ENCODE measurements at regions of chr4 and their contacts with region 1.

Region 1: GRCh38 chr4:73573794-73574406 is 46.3 kb downstream of the RASSF6 start:
- DNase-seq: peak; percentile 10
- H3K4me3 ChIP-seq: no peak overlapping the region
- CTCF ChIP-seq: peak; percentile 79

Region 2: DNA sequence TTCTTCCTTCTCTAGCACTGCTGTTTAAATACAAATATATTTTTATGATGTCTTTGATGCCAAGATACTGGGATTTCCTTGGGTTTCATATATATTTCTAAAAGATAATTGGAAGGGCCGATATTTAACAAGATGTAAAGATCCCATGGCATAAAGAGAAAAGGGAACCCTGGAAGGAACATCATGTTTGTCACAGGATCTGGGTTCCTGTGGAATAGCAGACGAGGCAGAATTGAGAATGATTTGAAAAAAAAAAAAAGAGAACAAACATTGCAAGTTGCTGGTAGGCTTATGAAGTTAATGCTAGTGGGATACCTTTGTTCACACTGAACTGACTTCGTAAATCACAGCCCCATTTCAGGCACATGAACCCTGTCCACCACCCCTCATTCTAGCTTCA is 12.8 kb after region 1 on chr4:
- CTCF ChIA-PET with region 1: interaction called, 10 read pairs
- POLR2A ChIA-PET with region 1: no interaction called
- DNase-seq: no peak
- H3K4me3 ChIP-seq: no peak overlapping the region
- CTCF ChIP-seq: no peak

Region 3: DNA sequence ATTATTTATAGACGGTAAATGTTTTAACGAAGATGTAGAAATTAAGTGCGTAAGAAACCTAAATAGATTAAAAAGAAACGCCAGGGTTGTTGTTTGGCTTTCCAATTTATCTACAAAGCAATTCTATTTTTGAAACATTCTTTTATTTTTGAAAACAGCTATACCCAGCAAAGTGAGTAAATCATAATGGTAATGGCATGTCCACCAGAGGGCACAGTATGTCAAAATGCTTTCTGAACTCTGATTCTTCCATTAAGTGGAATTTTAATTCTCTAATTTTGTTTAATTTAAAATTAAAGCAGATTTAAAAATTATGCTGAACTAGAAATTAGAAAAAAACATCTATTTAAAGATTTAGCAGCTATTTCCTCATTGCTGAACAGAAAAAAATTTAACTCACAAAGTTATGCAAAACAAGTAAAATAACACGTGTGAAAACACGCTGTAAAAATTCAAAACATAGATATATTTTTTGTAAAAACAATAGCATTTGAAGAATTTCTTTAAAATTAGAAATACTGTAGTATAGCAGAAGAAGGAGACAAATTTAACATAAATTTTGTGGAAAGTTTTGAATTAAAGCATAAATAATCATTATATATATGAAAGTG is 19.8 kb after region 1 on chr4:
- CTCF ChIA-PET with region 1: interaction called, 11 read pairs
- POLR2A ChIA-PET with region 1: no interaction called
- DNase-seq: no peak
- H3K4me3 ChIP-seq: no peak overlapping the region
- CTCF ChIP-seq: peak; percentile 36

Measured in AG04449 (cell line).